H1 (cell line): ENCODE measurements at regions of chr21 and their contacts with region 1.

Region 1: GRCh38 chr21:42381334-42381984 is 14.4 kb downstream of the TMPRSS3 start:
- DNase-seq: no peak
- H3K4me3 ChIP-seq: no peak overlapping the region
- H3K27ac ChIP-seq: no peak overlapping the region
- H3K4me1 ChIP-seq: no peaks in the 10 kb centered on the region
- H3K27me3 ChIP-seq: no peaks in the 10 kb centered on the region; a peak in 1 of 7 replicates
- CTCF ChIP-seq: peak; percentile 73 to 99 (median 87)
- EP300 ChIP-seq: no peak
- POLR2A ChIP-seq: no peak
- RAD21 ChIP-seq: peak; percentile 78 to 84

Region 2: DNA sequence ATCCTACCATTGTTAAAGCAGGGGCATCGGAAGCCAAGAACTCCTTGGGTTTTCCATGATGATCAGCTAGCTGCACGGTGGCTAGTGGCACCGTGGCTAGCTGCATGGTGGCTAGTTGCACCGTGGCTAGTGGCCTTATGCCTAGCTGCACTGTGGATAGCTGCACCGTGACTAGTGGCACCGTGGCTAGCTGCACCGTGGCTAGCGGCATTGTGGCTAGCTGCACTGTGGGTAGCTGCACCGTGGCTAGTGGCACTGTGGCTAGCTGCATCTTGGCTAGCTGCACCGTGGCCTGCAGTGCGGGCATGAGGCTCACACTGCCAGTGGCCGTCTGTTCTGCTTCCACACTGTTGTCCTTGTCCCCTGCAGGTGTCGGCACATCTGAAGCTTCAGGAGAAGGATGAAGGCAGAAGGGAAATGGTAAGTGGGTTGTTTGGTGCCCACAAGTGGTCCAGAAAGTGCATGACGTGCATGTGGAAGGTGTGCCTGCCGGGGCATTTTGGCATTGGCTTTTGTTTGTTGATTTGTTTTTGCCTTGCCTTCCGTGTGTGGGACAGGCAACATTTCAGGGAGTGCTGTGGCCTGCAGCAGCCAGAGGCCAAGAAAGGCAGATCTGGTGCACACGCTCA is 104.8 kb before region 1 on chr21:
- CTCF ChIA-PET with region 1: no interaction called
- POLR2A ChIA-PET with region 1: no interaction called
- DNase-seq: no peak
- H3K4me3 ChIP-seq: no peak overlapping the region
- H3K27ac ChIP-seq: no peak overlapping the region
- H3K4me1 ChIP-seq: no peaks in the 10 kb centered on the region
- H3K27me3 ChIP-seq: no peaks in the 10 kb centered on the region
- CTCF ChIP-seq: peak in 2 of 3 experiments; percentile 30 to 37; a peak in 3 of 4 replicates
- EP300 ChIP-seq: no peak
- POLR2A ChIP-seq: no peak
- RAD21 ChIP-seq: peak; percentile 43 to 49; a peak in 3 of 4 replicates

Region 3: GRCh38 chr21:42366321-42367009 is 15.0 kb before region 1 on chr21 and contains the start of gene TFF1:
- CTCF ChIA-PET with region 1: interaction called, 20 read pairs
- POLR2A ChIA-PET with region 1: interaction called, 6 read pairs
- DNase-seq: no peak
- H3K4me3 ChIP-seq: no peak within 1 kb of the TSS
- H3K27ac ChIP-seq: no peak within 1 kb of the TSS
- H3K4me1 ChIP-seq: no peaks in the 10 kb centered on the region; a peak in 3 of 7 replicates
- H3K27me3 ChIP-seq: peaks cover 0 to 2% (median 0%) of the 10 kb centered on the region in 4 experiments; a peak in 1 of 7 replicates
- CTCF ChIP-seq: no peak
- EP300 ChIP-seq: no peak
- POLR2A ChIP-seq: no peak
- RAD21 ChIP-seq: no peak
- total RNA-seq, gene TFF1: not detected in 2 replicates